ENCODE measurements at regions of chr6 and their contacts with region 1.

Region 1: DNA sequence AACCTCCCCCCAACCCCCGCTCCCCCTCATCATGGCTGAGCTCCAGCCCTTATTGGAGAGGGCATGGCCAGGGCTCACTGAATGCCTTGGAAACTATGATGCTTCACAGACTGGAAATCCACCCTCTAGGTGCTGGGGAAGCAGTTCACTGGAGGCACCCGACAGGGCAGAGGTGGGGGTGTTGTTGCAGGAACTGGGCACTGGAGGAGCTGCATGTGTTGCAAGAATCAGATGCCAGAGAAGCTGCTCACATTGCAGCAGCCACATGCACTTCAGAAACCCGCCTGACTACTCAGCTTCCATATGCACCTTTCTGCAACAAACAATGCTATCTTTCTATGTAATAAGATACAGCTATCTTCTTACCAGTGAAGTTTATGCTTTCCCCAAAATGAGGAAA is 7.9 kb upstream of the TBPL1 start:
- DNase-seq: no peak
- ATAC-seq: no peak
- H3K4me3 ChIP-seq: no peak overlapping the region
- H3K4me3 Mint-ChIP-seq: no peak overlapping the region
- H3K27ac ChIP-seq: no peak overlapping the region
- H3K27ac Mint-ChIP-seq: no peak overlapping the region
- H3K4me1 ChIP-seq: no peaks in the 10 kb centered on the region
- H3K4me1 Mint-ChIP-seq: no peaks in the 10 kb centered on the region
- H3K27me3 ChIP-seq: no peaks in the 10 kb centered on the region
- H3K27me3 Mint-ChIP-seq: peaks cover 2% of the 10 kb centered on the region
- CTCF ChIP-seq: no peak

Region 2: DNA sequence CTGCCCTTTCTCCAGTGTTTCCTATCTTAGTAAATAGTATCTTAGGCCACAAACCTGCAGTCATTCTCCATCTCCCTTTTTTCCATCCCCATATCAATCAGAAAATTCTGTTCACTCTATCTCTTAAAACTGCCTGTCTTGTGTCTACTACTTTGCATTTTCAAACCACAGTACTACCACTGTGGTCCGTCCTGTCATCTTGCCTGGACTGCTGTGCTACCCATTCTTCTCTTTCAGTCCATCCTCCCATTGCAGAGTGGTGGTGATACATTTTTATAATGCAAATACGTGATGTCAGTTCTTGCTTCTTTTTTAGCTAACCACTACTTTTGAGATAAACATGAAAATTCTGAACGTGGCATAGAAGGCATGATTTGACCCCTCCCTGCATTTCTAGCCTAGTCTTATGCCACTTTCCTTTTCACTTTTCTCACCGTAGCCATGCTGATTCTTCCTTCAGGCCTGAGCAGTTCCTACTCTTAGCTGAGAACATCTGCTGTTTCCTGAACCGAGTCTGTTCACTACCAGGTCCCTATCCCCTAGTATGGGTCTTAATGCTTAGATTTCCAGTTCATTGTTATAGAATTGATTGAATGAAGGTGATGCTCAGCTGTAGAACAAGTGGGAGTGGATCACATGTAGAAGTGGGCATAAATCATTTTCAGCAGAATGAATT is 21.6 kb after region 1 on chr6:
- CTCF ChIA-PET with region 1: no interaction called
- POLR2A ChIA-PET with region 1: no interaction called
- intact Hi-C with region 1: loop called in 1 of 2 experiments (anchors 1 kb)
- DNase-seq: no peak
- ATAC-seq: no peak
- H3K4me3 ChIP-seq: no peak overlapping the region
- H3K4me3 Mint-ChIP-seq: no peak overlapping the region
- H3K27ac ChIP-seq: peak overlapping the region in 1 of 2 experiments; percentile 18
- H3K27ac Mint-ChIP-seq: peak overlapping the region; percentile 66
- H3K4me1 ChIP-seq: peaks cover 18% of the 10 kb centered on the region
- H3K4me1 Mint-ChIP-seq: peaks cover 73% of the 10 kb centered on the region
- H3K27me3 ChIP-seq: no peaks in the 10 kb centered on the region
- H3K27me3 Mint-ChIP-seq: no peaks in the 10 kb centered on the region
- CTCF ChIP-seq: no peak

Region 3: DNA sequence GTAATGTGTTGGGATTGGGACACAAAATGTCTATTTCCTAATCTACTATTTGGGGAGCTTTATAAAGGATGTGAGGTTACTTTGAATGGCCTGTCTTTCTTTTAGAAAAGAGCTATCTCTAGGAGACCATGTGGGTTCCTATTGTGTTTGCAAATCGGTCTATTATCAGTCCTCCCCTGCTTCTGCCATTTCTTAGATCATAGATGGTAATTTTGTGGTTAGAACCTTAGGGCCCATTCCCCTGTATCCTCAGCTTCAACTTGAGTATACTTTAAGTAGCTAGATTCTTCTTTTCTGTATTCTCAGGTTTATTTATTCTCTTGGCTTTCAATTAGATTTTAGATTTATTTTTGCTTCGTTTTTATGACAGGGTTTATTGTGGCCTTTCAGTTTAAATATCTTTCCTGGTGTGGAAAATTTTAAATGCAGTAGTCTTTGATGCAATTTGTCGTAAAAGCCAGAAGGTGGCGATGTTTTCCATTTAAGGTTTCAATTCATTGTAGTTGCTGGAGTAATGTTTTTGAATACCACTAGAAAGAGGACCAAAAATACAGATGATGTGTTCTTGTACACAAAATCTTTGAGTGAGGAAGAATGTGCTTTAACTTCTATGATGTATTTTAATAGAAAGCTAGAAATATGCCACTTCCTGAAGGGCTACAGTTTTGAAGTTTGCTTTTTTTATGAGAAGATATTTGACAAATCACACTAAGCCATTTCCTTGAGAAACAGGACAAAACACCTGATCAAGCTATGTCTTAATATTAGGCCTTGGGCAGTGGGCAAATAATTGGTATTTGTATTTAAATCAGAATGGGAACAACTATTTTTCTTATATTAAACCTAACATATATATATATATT is 28.2 kb after region 1 on chr6:
- CTCF ChIA-PET with region 1: interaction called, 11 read pairs
- POLR2A ChIA-PET with region 1: no interaction called
- intact Hi-C with region 1: no loop called
- DNase-seq: peak in 2 of 9 experiments; percentile 58 to 72
- ATAC-seq: peak; percentile 79
- H3K4me3 ChIP-seq: no peak overlapping the region
- H3K4me3 Mint-ChIP-seq: no peak overlapping the region
- H3K27ac ChIP-seq: no peak overlapping the region
- H3K27ac Mint-ChIP-seq: no peak overlapping the region
- H3K4me1 ChIP-seq: no peaks in the 10 kb centered on the region
- H3K4me1 Mint-ChIP-seq: peaks cover 61% of the 10 kb centered on the region
- H3K27me3 ChIP-seq: no peaks in the 10 kb centered on the region
- H3K27me3 Mint-ChIP-seq: no peaks in the 10 kb centered on the region
- CTCF ChIP-seq: peak; percentile 89